K562 (cell line): ENCODE measurements at regions of chr11 and their contacts with region 1.

Region 1: GRCh38 chr11:3824714-3825472 is 15.9 kb downstream of the RHOG start:
- DNase-seq: peak; percentile 88 to 96 (median 90)
- ATAC-seq: peak; percentile 95
- H3K4me3 ChIP-seq: no peak overlapping the region
- H3K27ac ChIP-seq: peak overlapping the region; percentile 60
- H3K4me1 ChIP-seq: peaks cover 23 to 30% of the 10 kb centered on the region in 2 experiments
- H3K27me3 ChIP-seq: no peaks in the 10 kb centered on the region
- CTCF ChIP-seq: peak; percentile 99
- EP300 ChIP-seq: no peak
- POLR2A ChIP-seq: no peak
- RAD21 ChIP-seq: peak; percentile 91 to 94

Region 2: GRCh38 chr11:3841426-3842350 is 16.8 kb after region 1 on chr11:
- CTCF ChIA-PET with region 1: interaction called, 5 read pairs
- POLR2A ChIA-PET with region 1: interaction called, 18 read pairs
- in situ Hi-C with region 1: no loop called
- intact Hi-C with region 1: loop called (anchors 1 kb)
- DNase-seq: peak; percentile 79 to 94 (median 80)
- ATAC-seq: peak; percentile 67
- H3K4me3 ChIP-seq: peak overlapping the region; percentile 89
- H3K27ac ChIP-seq: peak overlapping the region; percentile 86
- H3K4me1 ChIP-seq: peaks cover 22 to 46% of the 10 kb centered on the region in 2 experiments
- H3K27me3 ChIP-seq: no peaks in the 10 kb centered on the region
- CTCF ChIP-seq: peak; percentile 86 to 95 (median 89)
- EP300 ChIP-seq: no peak; the same call in 1 of the 2 replicates
- POLR2A ChIP-seq: peak; percentile 52; the same call in 1 of the 2 replicates
- RAD21 ChIP-seq: peak; percentile 83 to 88

Region 3: DNA sequence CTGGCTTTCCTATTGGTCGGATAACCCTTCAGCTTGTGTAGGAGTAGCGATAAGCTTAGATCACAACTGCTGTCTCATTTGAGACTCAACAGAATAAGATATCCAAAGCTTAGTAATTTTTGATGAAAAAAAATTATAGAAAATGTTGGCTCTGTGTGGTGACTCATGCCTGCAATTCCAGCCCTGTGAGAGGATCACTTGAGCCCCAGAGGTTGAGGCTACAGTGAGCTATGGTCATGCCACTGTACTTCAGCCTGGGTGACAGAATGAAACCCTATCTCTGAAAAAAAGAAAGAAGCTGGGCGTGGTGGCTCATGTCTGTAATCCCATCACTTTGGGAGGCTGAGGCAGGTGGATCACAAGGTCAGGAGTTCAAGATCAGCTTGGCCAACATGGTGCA is 214.1 kb after region 1 on chr11:
- CTCF ChIA-PET with region 1: no interaction called
- POLR2A ChIA-PET with region 1: no interaction called
- in situ Hi-C with region 1: no loop called
- intact Hi-C with region 1: no loop called
- DNase-seq: no peak
- ATAC-seq: no peak
- H3K4me3 ChIP-seq: no peak overlapping the region
- H3K27ac ChIP-seq: no peak overlapping the region
- H3K4me1 ChIP-seq: peaks cover 0 to 2% of the 10 kb centered on the region in 2 experiments; a peak in 2 of 5 replicates
- H3K27me3 ChIP-seq: no peaks in the 10 kb centered on the region
- CTCF ChIP-seq: no peak
- EP300 ChIP-seq: no peak
- POLR2A ChIP-seq: no peak
- RAD21 ChIP-seq: no peak